ENCODE measurements at regions of chr7 and their contacts with region 1.

Region 1: GRCh38 chr7:149125863-149126661 is at the start of gene ZNF425:
- DNase-seq: peak; percentile 91
- H3K4me3 Mint-ChIP-seq: peak within 1 kb of the TSS; percentile 98
- H3K27ac Mint-ChIP-seq: peak within 1 kb of the TSS; percentile 99
- H3K4me1 Mint-ChIP-seq: peaks cover 22% of the 10 kb centered on the region
- H3K27me3 Mint-ChIP-seq: no peaks in the 10 kb centered on the region
- total RNA-seq, gene ZNF425: 0.57 TPM

Region 2: GRCh38 chr7:148987010-148987750 is 138.9 kb before region 1 on chr7:
- CTCF ChIA-PET with region 1: interaction called, 3 read pairs
- intact Hi-C with region 1: loop called (anchors 1 kb)
- DNase-seq: peak; percentile 88
- H3K4me3 Mint-ChIP-seq: peak overlapping the region; percentile 98
- H3K27ac Mint-ChIP-seq: peak overlapping the region; percentile 93
- H3K4me1 Mint-ChIP-seq: peaks cover 40% of the 10 kb centered on the region
- H3K27me3 Mint-ChIP-seq: peaks cover 7% of the 10 kb centered on the region

Region 3: GRCh38 chr7:149050941-149051340 is 75.1 kb before region 1 on chr7:
- CTCF ChIA-PET with region 1: no interaction called
- intact Hi-C with region 1: no loop called
- DNase-seq: no peak
- H3K4me3 Mint-ChIP-seq: no peak overlapping the region
- H3K27ac Mint-ChIP-seq: no peak overlapping the region
- H3K4me1 Mint-ChIP-seq: no peaks in the 10 kb centered on the region
- H3K27me3 Mint-ChIP-seq: no peaks in the 10 kb centered on the region

Region 4: GRCh38 chr7:149090397-149091195 is 35.5 kb before region 1 on chr7 and contains the start of gene ZNF786:
- CTCF ChIA-PET with region 1: interaction called, 6 read pairs
- intact Hi-C with region 1: loop called (anchors 1 kb)
- DNase-seq: peak; percentile 94
- H3K4me3 Mint-ChIP-seq: peak within 1 kb of the TSS; percentile 90
- H3K27ac Mint-ChIP-seq: peak within 1 kb of the TSS; percentile 99
- H3K4me1 Mint-ChIP-seq: peaks cover 20% of the 10 kb centered on the region
- H3K27me3 Mint-ChIP-seq: no peaks in the 10 kb centered on the region
- total RNA-seq, gene ZNF786: 2.1 to 2.2 TPM

Region 5: GRCh38 chr7:149161241-149161848 is 35.3 kb after region 1 on chr7:
- CTCF ChIA-PET with region 1: no interaction called
- intact Hi-C with region 1: no loop called
- DNase-seq: peak; percentile 31
- H3K4me3 Mint-ChIP-seq: no peak overlapping the region
- H3K27ac Mint-ChIP-seq: peak overlapping the region; percentile 78
- H3K4me1 Mint-ChIP-seq: peaks cover 30% of the 10 kb centered on the region
- H3K27me3 Mint-ChIP-seq: no peaks in the 10 kb centered on the region

Region 6: GRCh38 chr7:149239345-149240191 is 113.5 kb after region 1 on chr7 and contains the start of gene ZNF212:
- CTCF ChIA-PET with region 1: no interaction called
- intact Hi-C with region 1: loop called (anchors 1 kb)
- DNase-seq: peak; percentile 93
- H3K4me3 Mint-ChIP-seq: peak within 1 kb of the TSS; percentile 89
- H3K27ac Mint-ChIP-seq: peak within 1 kb of the TSS; percentile 90
- H3K4me1 Mint-ChIP-seq: peaks cover 38% of the 10 kb centered on the region
- H3K27me3 Mint-ChIP-seq: no peaks in the 10 kb centered on the region
- total RNA-seq, gene ZNF212: 9.0 to 10.4 TPM

Region 7: GRCh38 chr7:149252378-149252777 is 126.3 kb after region 1 on chr7:
- CTCF ChIA-PET with region 1: no interaction called
- intact Hi-C with region 1: no loop called
- DNase-seq: no peak
- H3K4me3 Mint-ChIP-seq: no peak overlapping the region
- H3K27ac Mint-ChIP-seq: no peak overlapping the region
- H3K4me1 Mint-ChIP-seq: peaks cover 27% of the 10 kb centered on the region
- H3K27me3 Mint-ChIP-seq: no peaks in the 10 kb centered on the region

Region 8: GRCh38 chr7:149385195-149385950 is 259.3 kb after region 1 on chr7:
- CTCF ChIA-PET with region 1: no interaction called
- intact Hi-C with region 1: no loop called
- DNase-seq: no peak
- H3K4me3 Mint-ChIP-seq: no peak overlapping the region
- H3K27ac Mint-ChIP-seq: no peak overlapping the region
- H3K4me1 Mint-ChIP-seq: no peaks in the 10 kb centered on the region
- H3K27me3 Mint-ChIP-seq: peaks cover 5% of the 10 kb centered on the region

Region 9: DNA sequence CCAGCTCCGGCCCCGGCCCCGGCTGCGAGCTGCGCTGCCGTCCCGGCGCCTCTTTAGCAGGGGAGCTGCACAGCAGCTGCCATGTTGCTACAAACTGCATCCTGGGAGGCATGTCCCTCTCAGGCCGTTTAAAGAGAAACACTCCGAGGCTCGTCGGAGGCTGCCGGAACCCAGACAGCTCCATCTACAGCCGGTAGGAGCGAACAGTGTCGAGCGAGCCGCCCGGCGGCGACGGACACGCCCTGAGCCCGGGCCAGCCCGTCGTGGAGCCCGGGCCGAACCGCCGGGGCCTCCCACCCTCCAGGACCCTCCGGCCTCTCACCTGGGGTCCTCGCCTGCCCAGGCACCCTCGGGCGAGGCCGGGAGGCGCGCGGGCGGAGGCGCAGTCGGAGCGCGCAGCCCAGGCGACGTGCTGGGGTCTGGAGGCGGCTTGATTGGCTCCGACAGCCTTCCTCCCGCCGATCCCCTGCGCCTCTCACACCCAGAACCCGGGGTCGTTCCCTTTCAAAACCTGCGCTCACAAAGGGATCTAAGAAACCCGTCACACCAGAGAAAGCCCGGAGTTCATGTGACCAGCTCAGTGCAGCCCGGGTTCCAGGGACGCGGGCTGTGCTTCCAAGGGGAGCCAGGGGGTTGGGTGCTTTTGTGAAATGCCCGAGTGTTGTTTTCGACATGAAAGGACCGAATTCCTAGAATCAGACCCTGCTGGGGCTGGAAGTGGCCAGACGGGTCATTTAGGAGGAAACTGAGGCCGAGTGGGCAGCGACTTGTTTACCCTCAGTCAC is 334.6 kb after region 1 on chr7 and contains the start of gene ZNF777:
- CTCF ChIA-PET with region 1: no interaction called
- intact Hi-C with region 1: loop called (anchors 1 kb)
- DNase-seq: peak; percentile 85
- H3K4me3 Mint-ChIP-seq: peak within 1 kb of the TSS; percentile 80
- H3K27ac Mint-ChIP-seq: peak within 1 kb of the TSS; percentile 59
- H3K4me1 Mint-ChIP-seq: peaks cover 22% of the 10 kb centered on the region
- H3K27me3 Mint-ChIP-seq: peaks cover 3% of the 10 kb centered on the region
- total RNA-seq, gene ZNF777: 8.7 to 9.7 TPM

Region 10: DNA sequence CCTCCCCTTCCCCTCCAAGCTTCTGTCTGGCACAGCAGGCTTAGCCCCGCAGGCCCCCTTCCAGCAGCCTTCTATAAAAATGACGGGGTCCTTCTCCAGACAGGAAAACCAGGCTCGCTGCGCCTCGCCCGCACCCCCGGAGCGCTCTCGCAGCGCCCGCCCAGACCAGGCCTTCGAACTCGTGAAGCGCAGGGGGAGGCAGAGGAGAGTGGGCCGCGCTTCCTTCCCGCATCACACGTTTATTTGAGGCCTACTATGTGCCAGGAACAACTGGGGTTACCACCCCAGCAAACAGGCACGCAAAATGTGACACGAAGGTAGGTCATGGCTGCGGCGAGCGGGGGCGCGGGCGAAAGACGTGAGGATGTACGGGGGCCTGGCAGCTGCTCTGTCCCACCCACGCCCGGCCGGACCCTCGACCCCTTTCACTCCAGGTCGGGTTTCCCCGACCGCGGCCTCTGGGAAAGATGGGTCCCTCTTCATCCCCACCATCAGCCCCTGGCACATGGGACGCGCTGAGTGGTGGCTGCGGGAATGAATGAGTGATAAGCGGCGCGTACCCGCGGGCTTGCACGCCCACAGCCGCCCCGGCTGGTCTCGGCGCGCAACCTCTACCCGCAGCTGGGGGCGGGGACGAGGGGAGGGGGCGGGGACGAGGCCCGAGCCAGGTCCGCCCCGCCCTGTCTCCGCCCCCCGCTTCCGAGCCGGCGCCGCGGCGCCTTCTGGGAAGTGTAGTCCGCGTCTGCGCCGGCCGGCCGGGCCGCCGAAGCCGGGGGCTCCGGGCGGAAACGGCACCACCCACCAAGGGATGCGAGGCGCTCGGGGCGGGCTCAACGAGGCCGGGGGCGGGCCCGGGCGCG is 588.2 kb after region 1 on chr7:
- CTCF ChIA-PET with region 1: no interaction called
- intact Hi-C with region 1: loop called (anchors 10 kb)
- DNase-seq: peak; percentile 94
- H3K4me3 Mint-ChIP-seq: peak overlapping the region; percentile 73
- H3K27ac Mint-ChIP-seq: no peak overlapping the region
- H3K4me1 Mint-ChIP-seq: peaks cover 17% of the 10 kb centered on the region
- H3K27me3 Mint-ChIP-seq: no peaks in the 10 kb centered on the region

Measured in activated naive CD4-positive, alpha-beta T cell treated with anti-CD3 and anti-CD28 coated beads for 36 hours (primary cell).